Gastrocnemius medialis (tissue), 4 donors: ENCODE measurements at regions of chr3 and their contacts with region 1.

Region 1: GRCh38 chr3:186570096-186570940 is at the start of gene DNAJB11:
- DNase-seq: peak; percentile 99
- ATAC-seq: peak; percentile 90 to 96
- H3K4me3 ChIP-seq: peak within 1 kb of the TSS; percentile 81 to 99 (median 93)
- H3K27ac ChIP-seq: peak within 1 kb of the TSS; percentile 90 to 97 (median 94)
- H3K4me1 ChIP-seq: peaks cover 25 to 34% of the 10 kb centered on the region in 2 donors
- H3K27me3 ChIP-seq: no peaks in the 10 kb centered on the region
- CTCF ChIP-seq: no peak
- POLR2A ChIP-seq: peak; percentile 70 to 77
- total RNA-seq, gene DNAJB11: 15.1 to 24.7 (median 23.0) TPM

Region 2: DNA sequence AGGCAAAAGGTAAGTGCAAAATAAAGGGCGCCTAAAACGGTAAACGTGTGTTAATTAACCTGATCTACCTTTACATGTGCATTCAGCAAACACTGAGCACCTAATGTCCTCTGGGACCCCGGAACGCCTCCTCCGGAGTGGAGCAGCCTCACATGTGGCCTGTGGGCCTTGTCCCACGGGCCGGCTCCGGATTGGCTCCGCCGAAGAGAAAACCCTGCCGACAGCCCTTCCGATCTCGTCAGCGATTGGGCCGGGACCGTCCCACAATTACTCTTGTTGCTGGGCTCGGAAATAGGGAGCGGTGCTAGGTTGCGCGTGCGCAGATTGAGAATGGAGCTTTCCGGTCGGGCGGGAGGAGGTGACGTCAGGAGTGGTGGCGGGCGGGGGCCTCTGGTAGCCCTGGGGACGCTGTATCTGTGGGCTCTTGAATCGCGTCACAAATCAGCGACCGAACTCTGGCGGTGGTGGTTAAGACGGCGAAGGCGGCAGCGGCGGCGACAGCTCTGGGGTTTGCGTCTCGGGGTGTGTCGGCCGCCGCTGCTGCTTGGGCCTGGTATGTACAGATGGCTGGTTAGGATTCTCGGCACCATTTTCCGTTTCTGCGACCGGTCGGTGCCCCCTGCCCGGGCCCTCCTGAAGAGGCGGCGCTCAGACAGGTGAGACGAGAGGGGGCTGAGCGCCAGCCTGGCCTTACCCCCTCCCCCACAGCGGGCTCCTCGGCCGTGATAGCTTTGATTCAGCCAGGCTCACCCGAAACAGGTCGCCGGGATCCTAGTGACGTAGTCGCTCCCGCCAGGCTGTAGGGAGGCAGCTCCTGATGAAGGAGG is 984.2 kb before region 1 on chr3 and contains the start of gene SENP2:
- in situ Hi-C with region 1: loop called in 1 of 4 experiments (anchors 25 kb)
- intact Hi-C with region 1: loop called (anchors 2 kb)
- DNase-seq: peak; percentile 99
- ATAC-seq: peak; percentile 99
- H3K4me3 ChIP-seq: peak within 1 kb of the TSS; percentile 79 to 98 (median 89)
- H3K27ac ChIP-seq: peak within 1 kb of the TSS; percentile 93 to 95 (median 94)
- H3K4me1 ChIP-seq: peaks cover 14 to 25% of the 10 kb centered on the region in 2 donors
- H3K27me3 ChIP-seq: no peaks in the 10 kb centered on the region
- CTCF ChIP-seq: no peak
- POLR2A ChIP-seq: peak; percentile 77 to 80
- total RNA-seq, gene SENP2: 18.6 to 34.9 (median 31.3) TPM

Region 3: DNA sequence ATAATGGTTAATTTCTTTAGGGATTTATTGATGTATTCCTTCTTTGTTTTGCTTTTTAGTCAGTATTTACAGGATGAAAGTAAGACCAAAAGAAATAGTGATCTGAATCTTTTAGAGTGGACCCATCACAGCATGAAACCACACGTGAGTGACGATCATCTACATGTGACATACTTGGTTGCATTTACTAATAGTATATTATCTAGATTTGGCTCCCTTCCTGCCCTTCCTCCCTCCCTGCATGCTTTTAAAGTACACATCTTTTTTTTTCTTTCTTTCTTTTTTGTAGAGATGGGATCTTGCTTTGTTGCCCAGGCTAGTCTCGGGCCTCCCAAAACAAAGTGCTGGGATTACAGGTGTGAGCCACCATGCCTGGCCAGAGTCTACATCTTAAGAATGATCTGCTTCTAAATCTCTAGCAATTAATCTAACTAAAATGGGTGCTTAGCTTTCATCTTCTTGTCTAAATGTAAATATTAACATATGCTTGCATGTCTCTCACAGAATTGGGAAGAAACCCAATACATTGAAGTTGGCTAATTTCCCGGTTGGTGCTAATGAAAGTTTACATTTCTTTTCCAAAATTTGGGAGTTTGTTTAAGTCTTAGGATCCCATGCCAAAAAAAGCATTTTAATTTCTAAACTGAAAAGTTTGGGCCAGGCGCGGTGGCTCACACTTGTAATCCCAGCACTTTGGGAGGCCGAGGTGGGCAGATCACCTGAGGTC is 946.2 kb before region 1 on chr3:
- in situ Hi-C with region 1: loop called in 1 of 4 experiments (anchors 25 kb)
- intact Hi-C with region 1: no loop called
- DNase-seq: no peak
- ATAC-seq: no peak
- H3K4me3 ChIP-seq: no peak overlapping the region
- H3K27ac ChIP-seq: no peak overlapping the region
- H3K4me1 ChIP-seq: no peaks in the 10 kb centered on the region
- H3K27me3 ChIP-seq: no peaks in the 10 kb centered on the region
- CTCF ChIP-seq: no peak
- POLR2A ChIP-seq: no peak

Region 4: GRCh38 chr3:185942907-185943759 is 627.2 kb before region 1 on chr3:
- in situ Hi-C with region 1: no loop called
- intact Hi-C with region 1: loop called (anchors 5 kb)
- DNase-seq: peak; percentile 88 to 94
- ATAC-seq: peak; percentile 97 to 99
- H3K4me3 ChIP-seq: no peak overlapping the region
- H3K27ac ChIP-seq: peak overlapping the region; percentile 72 to 81 (median 78)
- H3K4me1 ChIP-seq: peaks cover 10 to 14% of the 10 kb centered on the region in 2 donors
- H3K27me3 ChIP-seq: no peaks in the 10 kb centered on the region
- CTCF ChIP-seq: peak; percentile 95 to 99 (median 97)
- POLR2A ChIP-seq: peak in 1 of 2 donors; percentile 14

Region 5: GRCh38 chr3:186108941-186109865 is 461.1 kb before region 1 on chr3 and contains the start of gene ETV5:
- in situ Hi-C with region 1: loop called in 2 of 4 experiments (anchors 10 to 25 kb)
- intact Hi-C with region 1: loop called (anchors 2 kb)
- DNase-seq: peak; percentile 100
- ATAC-seq: peak; percentile 90 to 93
- H3K4me3 ChIP-seq: peak within 1 kb of the TSS; percentile 77 to 87 (median 80)
- H3K27ac ChIP-seq: peak within 1 kb of the TSS; percentile 88 to 95 (median 91)
- H3K4me1 ChIP-seq: peaks cover 18 to 23% of the 10 kb centered on the region in 2 donors
- H3K27me3 ChIP-seq: peaks cover 0 to 6% (median 3%) of the 10 kb centered on the region in 3 donors
- CTCF ChIP-seq: peak in 2 of 5 experiments; percentile 20 to 21
- POLR2A ChIP-seq: peak; percentile 86 to 95
- total RNA-seq, gene ETV5: 19.0 to 31.6 (median 21.3) TPM

Region 6: DNA sequence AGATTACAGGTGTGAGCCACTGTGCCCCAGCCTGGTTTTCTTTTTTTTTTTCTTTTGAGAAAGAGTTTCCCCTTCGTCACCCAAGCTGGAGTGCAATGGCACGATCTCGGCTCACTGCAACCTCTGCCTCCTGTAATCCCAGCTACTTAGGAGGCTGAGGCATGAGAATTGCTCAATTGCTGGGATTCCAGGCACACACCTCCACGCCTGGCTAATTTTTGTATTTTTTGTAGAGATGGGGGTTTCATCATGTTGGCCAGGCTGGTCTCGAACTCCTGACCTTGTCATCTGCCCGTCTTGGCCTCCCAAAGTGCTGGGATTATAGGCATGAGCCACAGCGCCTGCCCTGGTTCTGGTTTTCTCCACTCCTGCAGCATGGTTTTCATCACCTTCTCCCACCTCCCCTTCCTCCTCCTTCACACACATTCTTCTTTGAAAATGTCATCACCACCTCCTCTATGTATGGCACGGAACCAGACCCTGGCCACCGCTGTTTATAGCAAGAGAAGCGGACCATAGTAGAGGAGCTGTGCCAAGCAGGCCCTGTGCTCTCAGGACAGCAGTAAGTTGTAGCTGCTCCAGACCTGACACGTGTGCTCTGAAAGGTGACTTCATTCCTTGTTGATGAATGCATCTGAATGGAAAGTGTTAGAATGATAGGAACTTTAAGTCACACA is 27.9 kb after region 1 on chr3:
- in situ Hi-C with region 1: no loop called
- intact Hi-C with region 1: no loop called
- DNase-seq: no peak
- ATAC-seq: no peak
- H3K4me3 ChIP-seq: no peak overlapping the region
- H3K27ac ChIP-seq: no peak overlapping the region
- H3K4me1 ChIP-seq: no peaks in the 10 kb centered on the region
- H3K27me3 ChIP-seq: no peaks in the 10 kb centered on the region
- CTCF ChIP-seq: no peak
- POLR2A ChIP-seq: no peak

Region 7: GRCh38 chr3:186663361-186664118 is 93.2 kb after region 1 on chr3:
- in situ Hi-C with region 1: no loop called
- intact Hi-C with region 1: no loop called
- DNase-seq: no peak
- ATAC-seq: no peak
- H3K4me3 ChIP-seq: no peak overlapping the region
- H3K27ac ChIP-seq: no peak overlapping the region
- H3K4me1 ChIP-seq: no peaks in the 10 kb centered on the region
- H3K27me3 ChIP-seq: no peaks in the 10 kb centered on the region
- CTCF ChIP-seq: no peak
- POLR2A ChIP-seq: no peak

Region 8: DNA sequence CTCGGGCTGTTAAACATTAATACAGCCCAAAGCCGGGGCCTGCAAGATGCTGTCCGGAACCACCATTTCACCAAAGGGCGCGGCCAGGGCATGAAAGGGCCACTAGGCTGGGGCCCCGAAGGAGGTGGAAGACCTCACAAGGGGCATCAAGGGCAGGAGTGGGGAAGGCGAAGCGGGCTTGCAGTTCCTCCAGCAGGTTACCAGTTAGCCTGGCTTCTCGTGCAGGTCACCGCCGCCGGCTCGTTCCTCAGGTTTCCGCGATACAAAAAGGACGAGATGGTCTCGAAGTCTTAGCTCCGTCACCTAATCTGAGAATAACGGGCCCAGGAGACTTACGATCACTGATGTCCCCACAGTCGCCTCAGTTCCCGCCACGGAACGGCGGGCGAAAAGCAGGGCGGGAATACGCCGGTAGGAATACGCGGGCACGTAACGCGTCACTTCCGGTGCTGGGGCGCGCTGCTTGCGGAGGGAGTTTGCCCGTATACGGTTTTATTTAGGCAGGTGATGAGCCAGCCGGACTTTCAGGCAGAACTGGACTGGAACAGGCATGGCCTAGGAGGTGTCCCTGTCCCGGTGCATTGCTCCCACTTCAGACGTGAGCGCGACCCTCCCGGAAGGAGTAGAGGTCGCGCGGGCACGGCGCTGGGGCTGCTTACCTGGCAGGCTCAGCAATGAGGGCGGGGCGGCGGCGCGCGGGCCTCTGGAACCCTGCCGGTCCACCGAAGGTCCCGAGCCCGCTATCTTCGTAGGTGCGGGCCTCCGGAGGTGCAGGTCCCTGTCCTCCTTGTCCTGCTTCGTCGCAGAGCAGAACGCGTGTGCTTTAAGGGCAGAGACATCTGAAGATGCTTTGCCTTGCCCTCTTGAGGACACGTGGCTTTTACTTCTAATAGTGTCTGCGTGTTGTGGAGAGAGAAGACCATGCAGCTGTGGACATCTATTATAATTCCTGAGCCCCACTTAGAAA is 236.1 kb after region 1 on chr3 and contains the start of gene RFC4:
- in situ Hi-C with region 1: no loop called
- intact Hi-C with region 1: loop called (anchors 5 kb)
- DNase-seq: peak; percentile 70 to 71
- ATAC-seq: peak; percentile 95 to 98
- H3K4me3 ChIP-seq: peak within 1 kb of the TSS; percentile 84 to 97 (median 89)
- H3K27ac ChIP-seq: peak within 1 kb of the TSS; percentile 85 to 92 (median 88)
- H3K4me1 ChIP-seq: peaks cover 11 to 12% of the 10 kb centered on the region in 2 donors
- H3K27me3 ChIP-seq: no peaks in the 10 kb centered on the region
- CTCF ChIP-seq: no peak
- POLR2A ChIP-seq: peak; percentile 12 to 38
- total RNA-seq, gene RFC4: 4.5 to 15.1 (median 7.3) TPM